ENCODE measurements at regions of chr11 and their contacts with region 1.

Region 1: DNA sequence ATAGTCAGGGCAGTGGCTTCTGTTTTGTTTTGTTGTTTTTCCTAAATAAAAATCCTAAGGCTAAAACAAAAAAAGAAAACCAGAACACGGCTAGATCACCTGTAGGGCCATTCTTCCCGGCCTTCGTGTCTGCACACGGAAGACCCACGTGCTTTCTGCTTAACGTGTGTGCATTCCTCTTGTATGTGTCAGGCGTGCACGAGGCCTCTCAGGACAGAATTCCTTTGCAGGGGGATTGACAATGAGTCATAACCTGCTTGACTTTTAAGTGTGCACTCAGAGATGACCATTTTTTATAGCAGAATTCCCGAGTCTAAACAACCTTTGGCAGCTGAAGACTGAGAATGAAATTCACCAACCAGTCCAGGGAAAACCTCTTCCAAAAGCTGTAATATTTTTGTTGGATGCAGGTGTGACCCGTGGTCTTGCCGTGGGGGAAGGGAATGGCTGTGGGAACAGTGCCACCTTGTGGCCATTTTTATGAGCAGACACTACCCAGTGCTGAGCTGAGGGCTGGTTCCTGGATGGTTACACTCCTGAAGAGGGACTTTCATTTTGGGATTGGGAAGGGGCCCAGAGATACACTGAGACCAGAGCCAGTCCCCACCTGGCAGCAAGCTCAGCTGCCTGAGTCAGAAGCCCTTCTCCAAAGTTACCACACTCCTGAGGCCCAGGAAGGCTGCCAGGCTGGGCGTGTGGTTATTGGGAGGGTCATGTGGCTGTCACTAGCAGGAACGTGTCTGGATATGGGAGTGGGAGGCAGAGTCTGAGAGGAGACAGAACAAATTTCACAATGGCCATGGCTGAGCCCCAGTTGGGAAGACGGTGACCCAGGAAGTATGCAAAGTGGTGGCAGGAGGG is 35.8 kb upstream of the DKK3 start:
- DNase-seq: peak in 4 of 5 donors; percentile 49 to 60 (median 50)
- H3K4me3 ChIP-seq: no peak overlapping the region
- H3K4me3 Mint-ChIP-seq: no peak overlapping the region
- H3K27ac ChIP-seq: no peak overlapping the region
- H3K27ac Mint-ChIP-seq: no peak overlapping the region
- H3K4me1 ChIP-seq: no peaks in the 10 kb centered on the region
- H3K4me1 Mint-ChIP-seq: peaks cover 2 to 5% (median 3%) of the 10 kb centered on the region in 4 donors
- H3K27me3 ChIP-seq: no peaks in the 10 kb centered on the region
- H3K27me3 Mint-ChIP-seq: no peaks in the 10 kb centered on the region

Region 2: GRCh38 chr11:11931461-11932055 is 112.6 kb before region 1 on chr11:
- CTCF ChIA-PET with region 1: interaction called, 22 read pairs
- POLR2A ChIA-PET with region 1: no interaction called
- intact Hi-C with region 1: loop called (anchors 1 kb)
- DNase-seq: peak; percentile 26 to 42 (median 38)
- H3K4me3 ChIP-seq: no peak overlapping the region
- H3K4me3 Mint-ChIP-seq: no peak overlapping the region
- H3K27ac ChIP-seq: no peak overlapping the region
- H3K27ac Mint-ChIP-seq: no peak overlapping the region
- H3K4me1 ChIP-seq: no peaks in the 10 kb centered on the region
- H3K4me1 Mint-ChIP-seq: peaks cover 4 to 9% (median 7%) of the 10 kb centered on the region in 4 donors
- H3K27me3 ChIP-seq: no peaks in the 10 kb centered on the region
- H3K27me3 Mint-ChIP-seq: no peaks in the 10 kb centered on the region

Region 3: GRCh38 chr11:12061851-12062560 is 17.8 kb after region 1 on chr11:
- CTCF ChIA-PET with region 1: interaction called, 19 read pairs
- POLR2A ChIA-PET with region 1: no interaction called
- intact Hi-C with region 1: no loop called
- DNase-seq: no peak
- H3K4me3 ChIP-seq: no peak overlapping the region
- H3K4me3 Mint-ChIP-seq: peak overlapping the region in 1 of 8 donors; percentile 46
- H3K27ac ChIP-seq: no peak overlapping the region
- H3K27ac Mint-ChIP-seq: peak overlapping the region in 1 of 7 donors; percentile 42
- H3K4me1 ChIP-seq: no peaks in the 10 kb centered on the region
- H3K4me1 Mint-ChIP-seq: peaks cover 0 to 5% (median 1%) of the 10 kb centered on the region in 4 donors
- H3K27me3 ChIP-seq: no peaks in the 10 kb centered on the region
- H3K27me3 Mint-ChIP-seq: peaks cover 0 to 2% of the 10 kb centered on the region in 2 donors

Region 4: DNA sequence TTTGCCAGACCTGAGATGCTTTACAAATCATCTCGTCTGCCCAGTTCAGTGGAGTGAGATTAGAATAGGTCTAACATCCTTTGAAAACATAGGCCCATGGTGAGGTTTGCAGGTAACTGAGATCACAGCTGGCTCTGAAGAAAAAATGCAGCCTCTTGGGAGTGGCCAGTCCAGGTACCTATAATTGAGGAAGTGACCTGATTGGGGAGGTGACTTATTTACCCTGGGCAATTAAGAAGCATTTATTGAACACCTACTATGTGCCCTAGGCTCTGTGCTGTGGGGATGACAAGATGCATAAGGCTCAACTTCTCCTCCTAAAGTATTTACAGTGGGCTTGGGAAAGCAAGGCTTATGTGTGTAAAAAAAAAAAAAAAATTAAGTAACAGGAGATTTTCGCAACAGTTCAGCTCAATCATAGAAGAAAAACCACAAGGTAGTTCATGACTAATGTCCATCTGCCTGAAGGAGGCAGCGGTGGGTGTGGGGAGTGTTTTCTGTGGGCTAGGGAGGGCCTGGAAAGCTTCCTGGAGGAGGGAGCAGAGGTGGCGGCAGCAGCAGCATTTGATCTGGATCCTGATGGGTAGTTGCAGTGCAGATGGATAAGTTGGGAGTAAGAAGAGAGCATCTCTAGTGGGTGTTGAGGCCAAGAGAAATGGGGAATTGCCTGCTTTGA is 82.3 kb after region 1 on chr11:
- CTCF ChIA-PET with region 1: no interaction called
- POLR2A ChIA-PET with region 1: no interaction called
- intact Hi-C with region 1: no loop called
- DNase-seq: no peak
- H3K4me3 ChIP-seq: no peak overlapping the region
- H3K4me3 Mint-ChIP-seq: no peak overlapping the region
- H3K27ac ChIP-seq: no peak overlapping the region
- H3K27ac Mint-ChIP-seq: peak overlapping the region in 4 of 7 donors; percentile 12 to 62 (median 32)
- H3K4me1 ChIP-seq: peaks cover 24% of the 10 kb centered on the region
- H3K4me1 Mint-ChIP-seq: peaks cover 18 to 34% (median 24%) of the 10 kb centered on the region in 4 donors
- H3K27me3 ChIP-seq: no peaks in the 10 kb centered on the region
- H3K27me3 Mint-ChIP-seq: no peaks in the 10 kb centered on the region

Region 5: GRCh38 chr11:12893787-12894672 is 849.8 kb after region 1 on chr11:
- CTCF ChIA-PET with region 1: interaction called, 5 read pairs
- POLR2A ChIA-PET with region 1: no interaction called
- intact Hi-C with region 1: loop called (anchors 10 kb)
- DNase-seq: peak; percentile 29 to 46 (median 34)
- H3K4me3 ChIP-seq: no peak overlapping the region
- H3K4me3 Mint-ChIP-seq: no peak overlapping the region
- H3K27ac ChIP-seq: no peak overlapping the region
- H3K27ac Mint-ChIP-seq: no peak overlapping the region
- H3K4me1 ChIP-seq: no peaks in the 10 kb centered on the region
- H3K4me1 Mint-ChIP-seq: no peaks in the 10 kb centered on the region
- H3K27me3 ChIP-seq: no peaks in the 10 kb centered on the region
- H3K27me3 Mint-ChIP-seq: peaks cover 3 to 14% of the 10 kb centered on the region in 2 donors

Measured in CD4-positive, alpha-beta memory T cell (primary cell).